ENCODE measurements at regions of chr1 and their contacts with region 1.

Region 1: GRCh38 chr1:184754476-184755225 is at the start of gene EDEM3:
- DNase-seq: peak; percentile 97 to 100 (median 99)
- H3K4me3 ChIP-seq: peak within 1 kb of the TSS; percentile 73 to 96
- H3K4me3 Mint-ChIP-seq: peak within 1 kb of the TSS; percentile 90 to 98 (median 96)
- H3K27ac ChIP-seq: peak within 1 kb of the TSS; percentile 94
- H3K27ac Mint-ChIP-seq: peak within 1 kb of the TSS; percentile 82 to 98 (median 96)
- H3K4me1 ChIP-seq: peaks cover 32% of the 10 kb centered on the region
- H3K4me1 Mint-ChIP-seq: peaks cover 33 to 57% (median 44%) of the 10 kb centered on the region in 4 donors
- H3K27me3 ChIP-seq: no peaks in the 10 kb centered on the region
- H3K27me3 Mint-ChIP-seq: no peaks in the 10 kb centered on the region
- total RNA-seq, gene EDEM3: 58.6 to 61.7 TPM

Region 2: GRCh38 chr1:183471743-183472487 is 1282.7 kb before region 1 on chr1:
- CTCF ChIA-PET with region 1: no interaction called
- POLR2A ChIA-PET with region 1: no interaction called
- intact Hi-C with region 1: loop called (anchors 5 kb)
- DNase-seq: peak; percentile 96 to 99 (median 97)
- H3K4me3 ChIP-seq: peak overlapping the region; percentile 82 to 98
- H3K4me3 Mint-ChIP-seq: peak overlapping the region; percentile 90 to 99 (median 96)
- H3K27ac ChIP-seq: peak overlapping the region; percentile 91
- H3K27ac Mint-ChIP-seq: peak overlapping the region; percentile 99 to 100 (median 100)
- H3K4me1 ChIP-seq: peaks cover 39% of the 10 kb centered on the region
- H3K4me1 Mint-ChIP-seq: peaks cover 13 to 43% (median 19%) of the 10 kb centered on the region in 4 donors
- H3K27me3 ChIP-seq: no peaks in the 10 kb centered on the region
- H3K27me3 Mint-ChIP-seq: peaks cover 0 to 3% of the 10 kb centered on the region in 2 donors

Region 3: DNA sequence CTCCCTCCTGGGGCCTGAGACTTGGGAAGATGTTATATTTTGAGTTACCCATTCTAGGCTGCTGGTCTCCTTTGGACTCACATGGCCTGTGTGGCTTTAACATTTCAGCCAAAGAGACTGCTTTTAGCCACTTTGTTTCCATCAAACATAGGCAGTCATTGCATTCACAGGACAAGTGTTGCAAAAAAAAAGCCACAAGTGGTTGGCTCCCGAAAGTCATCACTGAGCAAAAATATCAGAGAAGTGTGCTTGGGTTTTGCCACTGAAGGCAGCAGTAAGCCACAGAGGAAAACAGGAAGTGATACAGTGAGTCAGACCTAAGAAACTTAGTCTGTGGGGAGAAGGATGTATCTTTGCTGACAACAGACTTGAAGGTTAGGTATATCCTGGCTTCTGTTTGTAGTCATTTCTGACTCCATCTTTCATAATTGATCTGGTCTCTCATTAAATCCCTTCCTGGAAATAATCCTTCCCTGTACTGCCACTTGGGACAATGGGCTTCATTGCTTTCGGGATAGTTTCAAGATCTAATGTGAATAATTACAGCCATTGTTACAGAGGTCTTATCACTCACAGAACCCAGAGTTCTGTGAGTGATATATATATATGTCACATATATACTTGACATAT is 798.0 kb before region 1 on chr1:
- CTCF ChIA-PET with region 1: no interaction called
- POLR2A ChIA-PET with region 1: no interaction called
- intact Hi-C with region 1: loop called (anchors 10 kb)
- DNase-seq: peak; percentile 72 to 78 (median 76)
- H3K4me3 ChIP-seq: no peak overlapping the region
- H3K4me3 Mint-ChIP-seq: peak overlapping the region in 7 of 8 donors; percentile 25 to 75 (median 67)
- H3K27ac ChIP-seq: peak overlapping the region; percentile 53
- H3K27ac Mint-ChIP-seq: no peak overlapping the region
- H3K4me1 ChIP-seq: peaks cover 37% of the 10 kb centered on the region
- H3K4me1 Mint-ChIP-seq: peaks cover 6 to 15% (median 7%) of the 10 kb centered on the region in 4 donors
- H3K27me3 ChIP-seq: no peaks in the 10 kb centered on the region
- H3K27me3 Mint-ChIP-seq: no peaks in the 10 kb centered on the region

Region 4: DNA sequence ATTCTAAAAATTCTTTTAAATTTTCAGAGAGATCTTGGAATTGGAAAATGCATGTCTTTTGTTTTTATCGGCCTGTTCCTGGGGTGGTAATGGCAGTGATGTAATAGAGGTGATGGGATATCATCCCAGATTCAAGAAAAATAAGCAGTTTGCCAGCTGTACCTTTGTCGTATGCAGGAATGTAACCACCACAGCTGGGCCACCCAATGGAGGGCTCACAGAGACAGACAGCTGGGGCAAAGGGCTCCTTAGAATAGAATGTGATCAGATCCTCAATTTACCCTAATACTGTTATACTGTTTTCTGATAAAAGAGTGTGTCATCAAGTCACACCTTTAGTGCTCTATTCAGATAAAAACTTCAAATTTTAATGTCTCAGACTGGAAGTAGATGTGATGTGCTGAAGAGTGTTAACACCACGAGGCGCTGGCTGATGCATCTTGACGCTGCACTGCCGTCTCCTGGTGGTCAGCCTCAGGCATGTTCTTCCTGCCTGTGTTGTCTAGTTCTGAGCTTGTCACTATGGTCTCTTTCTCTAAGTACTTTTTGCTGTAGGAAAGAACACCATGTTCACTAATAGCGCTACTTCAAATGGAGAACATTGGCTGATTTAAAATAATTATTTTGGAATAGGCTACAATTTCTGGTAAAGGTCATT is 289.0 kb before region 1 on chr1:
- CTCF ChIA-PET with region 1: no interaction called
- POLR2A ChIA-PET with region 1: no interaction called
- intact Hi-C with region 1: no loop called
- DNase-seq: no peak
- H3K4me3 ChIP-seq: no peak overlapping the region
- H3K4me3 Mint-ChIP-seq: no peak overlapping the region
- H3K27ac ChIP-seq: no peak overlapping the region
- H3K27ac Mint-ChIP-seq: no peak overlapping the region
- H3K4me1 ChIP-seq: no peaks in the 10 kb centered on the region
- H3K4me1 Mint-ChIP-seq: no peaks in the 10 kb centered on the region
- H3K27me3 ChIP-seq: no peaks in the 10 kb centered on the region
- H3K27me3 Mint-ChIP-seq: peaks cover 7 to 15% of the 10 kb centered on the region in 2 donors

Region 5: DNA sequence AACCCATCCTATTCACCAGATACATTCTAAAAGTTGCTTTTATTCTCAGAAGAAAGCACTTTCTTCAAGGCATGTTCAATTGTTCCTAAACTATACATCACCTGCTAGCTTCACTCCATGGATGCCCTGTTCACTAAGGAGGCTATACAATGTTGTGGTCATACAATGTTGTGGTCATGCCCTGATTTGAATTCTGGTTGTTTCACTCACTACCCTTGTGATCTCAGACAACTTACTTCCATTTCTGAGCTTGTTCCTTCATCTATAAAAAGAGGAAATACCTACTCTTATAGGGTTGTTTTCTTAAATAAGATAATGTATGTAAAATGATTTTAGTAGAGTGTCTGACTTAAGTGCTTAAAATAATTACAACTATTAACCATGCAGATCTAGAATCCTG is 19.7 kb before region 1 on chr1:
- CTCF ChIA-PET with region 1: no interaction called
- POLR2A ChIA-PET with region 1: interaction called, 16 read pairs
- intact Hi-C with region 1: no loop called
- DNase-seq: no peak
- H3K4me3 ChIP-seq: no peak overlapping the region
- H3K4me3 Mint-ChIP-seq: peak overlapping the region in 1 of 8 donors; percentile 2
- H3K27ac ChIP-seq: no peak overlapping the region
- H3K27ac Mint-ChIP-seq: peak overlapping the region in 3 of 7 donors; percentile 21 to 42 (median 35)
- H3K4me1 ChIP-seq: no peaks in the 10 kb centered on the region
- H3K4me1 Mint-ChIP-seq: peaks cover 0 to 18% (median 15%) of the 10 kb centered on the region in 4 donors
- H3K27me3 ChIP-seq: no peaks in the 10 kb centered on the region
- H3K27me3 Mint-ChIP-seq: no peaks in the 10 kb centered on the region

Region 6: GRCh38 chr1:184805667-184806295 is 51.1 kb after region 1 on chr1:
- CTCF ChIA-PET with region 1: interaction called, 4 read pairs
- POLR2A ChIA-PET with region 1: no interaction called
- intact Hi-C with region 1: loop called (anchors 5 kb)
- DNase-seq: peak; percentile 76 to 80 (median 78)
- H3K4me3 ChIP-seq: no peak overlapping the region
- H3K4me3 Mint-ChIP-seq: no peak overlapping the region
- H3K27ac ChIP-seq: no peak overlapping the region
- H3K27ac Mint-ChIP-seq: peak overlapping the region; percentile 53 to 94 (median 86)
- H3K4me1 ChIP-seq: no peaks in the 10 kb centered on the region
- H3K4me1 Mint-ChIP-seq: peaks cover 4 to 7% (median 5%) of the 10 kb centered on the region in 4 donors
- H3K27me3 ChIP-seq: no peaks in the 10 kb centered on the region
- H3K27me3 Mint-ChIP-seq: no peaks in the 10 kb centered on the region

Region 7: DNA sequence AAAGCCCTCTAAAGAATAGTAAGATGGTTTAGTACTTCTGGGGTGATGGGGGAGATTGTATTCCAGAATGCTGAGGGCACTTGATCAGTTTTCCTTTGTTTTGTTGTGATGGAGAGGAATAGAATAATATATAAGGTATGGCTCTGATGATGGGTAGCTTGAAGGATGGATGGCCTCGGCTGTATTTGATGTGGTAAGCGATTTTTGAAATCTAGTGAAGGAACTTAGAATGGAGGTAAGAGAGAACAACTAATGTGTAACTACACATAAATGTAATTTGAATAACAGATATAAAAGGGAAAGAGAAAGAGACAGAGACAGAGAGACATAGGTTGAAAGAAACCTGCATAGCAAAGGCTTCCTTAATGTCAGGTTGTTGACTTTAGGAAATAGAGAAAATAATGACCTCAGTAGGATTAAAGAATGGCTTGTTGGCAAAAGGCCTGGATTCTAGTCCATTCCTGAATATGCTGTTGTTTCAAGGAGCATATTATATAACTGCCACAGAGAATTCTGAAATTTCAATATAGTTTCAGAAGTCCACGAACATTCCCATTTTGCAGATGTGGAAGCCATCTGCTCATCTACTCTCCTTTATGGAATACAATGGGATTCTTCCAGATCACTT is 160.9 kb after region 1 on chr1:
- CTCF ChIA-PET with region 1: no interaction called
- POLR2A ChIA-PET with region 1: no interaction called
- intact Hi-C with region 1: no loop called
- DNase-seq: no peak
- H3K4me3 ChIP-seq: no peak overlapping the region
- H3K4me3 Mint-ChIP-seq: no peak overlapping the region
- H3K27ac ChIP-seq: no peak overlapping the region
- H3K27ac Mint-ChIP-seq: peak overlapping the region in 1 of 7 donors; percentile 3
- H3K4me1 ChIP-seq: no peaks in the 10 kb centered on the region
- H3K4me1 Mint-ChIP-seq: peaks cover 15 to 35% (median 32%) of the 10 kb centered on the region in 4 donors
- H3K27me3 ChIP-seq: no peaks in the 10 kb centered on the region
- H3K27me3 Mint-ChIP-seq: no peaks in the 10 kb centered on the region

Region 8: GRCh38 chr1:184973272-184974055 is 218.8 kb after region 1 on chr1:
- CTCF ChIA-PET with region 1: interaction called, 3 read pairs
- POLR2A ChIA-PET with region 1: interaction called, 22 read pairs
- intact Hi-C with region 1: loop called (anchors 2 kb)
- DNase-seq: peak in 3 of 5 donors; percentile 55 to 86 (median 71)
- H3K4me3 ChIP-seq: peak overlapping the region; percentile 70 to 85
- H3K4me3 Mint-ChIP-seq: peak overlapping the region; percentile 93 to 100 (median 98)
- H3K27ac ChIP-seq: peak overlapping the region; percentile 91
- H3K27ac Mint-ChIP-seq: peak overlapping the region; percentile 96 to 100 (median 97)
- H3K4me1 ChIP-seq: peaks cover 66% of the 10 kb centered on the region
- H3K4me1 Mint-ChIP-seq: peaks cover 37 to 74% (median 55%) of the 10 kb centered on the region in 4 donors
- H3K27me3 ChIP-seq: no peaks in the 10 kb centered on the region
- H3K27me3 Mint-ChIP-seq: no peaks in the 10 kb centered on the region

Region 9: GRCh38 chr1:185670187-185670627 is 915.6 kb after region 1 on chr1:
- CTCF ChIA-PET with region 1: no interaction called
- POLR2A ChIA-PET with region 1: no interaction called
- intact Hi-C with region 1: loop called (anchors 5 kb)
- DNase-seq: peak; percentile 44 to 59 (median 57)
- H3K4me3 ChIP-seq: no peak overlapping the region
- H3K4me3 Mint-ChIP-seq: no peak overlapping the region
- H3K27ac ChIP-seq: no peak overlapping the region
- H3K27ac Mint-ChIP-seq: peak overlapping the region in 3 of 7 donors; percentile 3 to 31 (median 21)
- H3K4me1 ChIP-seq: peaks cover 14% of the 10 kb centered on the region
- H3K4me1 Mint-ChIP-seq: peaks cover 14 to 28% (median 20%) of the 10 kb centered on the region in 4 donors
- H3K27me3 ChIP-seq: no peaks in the 10 kb centered on the region
- H3K27me3 Mint-ChIP-seq: no peaks in the 10 kb centered on the region

Measured in CD4-positive, alpha-beta memory T cell (primary cell).